AG04449 (cell line): ENCODE measurements at regions of chr6 and their contacts with region 1.

Region 1: DNA sequence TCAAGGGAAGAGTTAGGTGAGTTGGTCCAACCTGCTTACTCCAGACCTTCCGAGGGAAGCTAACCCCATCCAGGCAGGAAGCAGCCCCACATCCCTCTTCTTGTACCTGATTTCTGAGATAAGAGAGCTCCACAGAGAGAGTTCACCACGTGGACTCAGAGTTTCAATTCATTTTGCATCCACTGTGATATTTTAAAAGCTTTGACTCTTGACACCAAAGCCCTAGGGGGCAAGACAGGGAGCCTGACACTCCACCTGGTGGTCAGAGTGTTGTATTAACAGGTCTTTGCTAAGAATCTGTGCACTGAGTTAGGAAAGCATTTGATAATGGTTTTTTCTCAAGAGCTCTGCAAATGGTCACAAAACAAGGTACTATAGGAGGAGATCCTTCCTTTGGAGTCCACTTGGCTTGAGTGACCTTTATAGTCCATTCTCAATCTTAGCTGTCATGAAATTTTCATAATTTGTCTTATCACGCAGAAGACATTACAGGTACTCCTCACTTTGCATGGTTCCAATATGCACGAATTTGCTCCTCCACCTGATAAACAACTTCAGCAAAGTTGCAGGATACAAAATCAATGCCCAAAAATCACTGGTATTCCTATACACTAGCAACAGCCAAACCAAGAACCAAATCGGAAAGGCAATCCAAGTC is 56.2 kb upstream of the RIPOR2 start:
- DNase-seq: no peak
- H3K4me3 ChIP-seq: no peak overlapping the region
- CTCF ChIP-seq: peak; percentile 54

Region 2: DNA sequence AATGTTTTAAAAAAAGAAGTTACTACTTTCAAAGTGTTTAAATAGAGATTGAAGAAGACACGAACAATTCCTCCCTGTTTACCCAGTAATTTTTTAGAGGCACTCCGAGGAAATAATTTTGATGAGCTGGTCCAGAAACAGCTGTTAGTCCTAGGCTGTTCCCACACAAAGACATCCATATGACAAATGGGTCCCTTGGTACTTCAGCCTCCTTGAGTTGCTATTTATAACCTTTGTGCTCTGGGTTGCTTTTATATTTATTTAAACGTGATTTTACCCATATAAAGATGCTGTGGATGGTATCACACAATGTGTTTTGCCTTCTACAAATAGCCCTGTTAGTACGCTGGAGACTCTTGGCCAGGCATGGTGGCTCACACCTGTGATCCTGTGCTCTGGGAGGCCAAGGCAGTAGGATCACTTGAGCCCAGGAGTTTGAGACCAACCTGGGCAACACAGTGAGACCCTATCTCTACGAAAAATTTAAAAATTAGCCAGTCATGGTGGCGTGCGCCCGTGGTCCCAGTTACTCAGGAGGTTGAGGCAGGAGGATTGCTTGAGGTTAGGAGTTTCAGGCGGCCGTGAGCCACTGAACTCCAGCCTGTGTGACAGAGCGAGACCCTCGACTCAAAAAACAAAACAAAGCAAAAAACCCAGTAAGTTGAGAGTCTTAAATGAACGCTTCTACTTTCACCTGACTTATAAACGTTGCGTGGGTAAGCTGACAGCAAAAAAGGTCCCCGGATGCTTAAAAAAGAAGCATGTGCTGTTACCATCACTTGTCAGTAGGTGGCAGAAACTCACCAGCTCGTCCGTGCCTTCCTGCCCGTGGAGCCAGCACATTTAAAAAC is 136.3 kb before region 1 on chr6:
- CTCF ChIA-PET with region 1: interaction called, 188 read pairs
- POLR2A ChIA-PET with region 1: interaction called, 3 read pairs
- DNase-seq: no peak
- H3K4me3 ChIP-seq: no peak overlapping the region
- CTCF ChIP-seq: peak; percentile 85

Region 3: GRCh38 chr6:24874776-24875534 is 117.0 kb before region 1 on chr6:
- CTCF ChIA-PET with region 1: interaction called, 15 read pairs
- POLR2A ChIA-PET with region 1: no interaction called
- DNase-seq: no peak
- H3K4me3 ChIP-seq: no peak overlapping the region
- CTCF ChIP-seq: no peak

Region 4: DNA sequence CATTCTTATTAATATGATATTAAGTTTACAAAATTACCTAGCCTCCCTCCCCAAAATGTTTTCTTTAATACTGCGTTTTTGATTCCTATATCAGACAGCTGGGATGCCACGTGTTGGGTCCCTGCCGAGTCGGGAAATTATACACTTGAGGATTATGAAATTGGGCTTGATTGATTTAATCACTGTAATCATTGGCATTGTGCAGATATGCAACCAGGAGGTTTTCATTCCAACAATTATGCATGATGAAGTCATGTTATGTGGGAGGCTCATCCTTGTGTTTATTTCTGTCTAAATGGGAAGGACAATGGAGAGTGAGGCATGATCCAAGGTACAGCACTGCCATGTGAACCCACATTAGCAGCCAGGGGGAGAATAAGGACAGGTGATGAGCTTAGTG is 25.6 kb before region 1 on chr6:
- CTCF ChIA-PET with region 1: interaction called, 17 read pairs
- POLR2A ChIA-PET with region 1: no interaction called
- DNase-seq: no peak
- H3K4me3 ChIP-seq: no peak overlapping the region
- CTCF ChIP-seq: no peak

Region 5: GRCh38 chr6:25006565-25007001 is 14.6 kb after region 1 on chr6:
- CTCF ChIA-PET with region 1: interaction called, 47 read pairs
- POLR2A ChIA-PET with region 1: no interaction called
- DNase-seq: no peak
- H3K4me3 ChIP-seq: no peak overlapping the region
- CTCF ChIP-seq: no peak

Region 6: GRCh38 chr6:25070547-25071366 is 78.8 kb after region 1 on chr6:
- CTCF ChIA-PET with region 1: interaction called, 31 read pairs
- POLR2A ChIA-PET with region 1: no interaction called
- DNase-seq: no peak
- H3K4me3 ChIP-seq: no peak overlapping the region
- CTCF ChIP-seq: peak; percentile 80

Region 7: GRCh38 chr6:25112207-25112874 is 120.4 kb after region 1 on chr6:
- CTCF ChIA-PET with region 1: no interaction called
- POLR2A ChIA-PET with region 1: no interaction called
- DNase-seq: no peak
- H3K4me3 ChIP-seq: no peak overlapping the region
- CTCF ChIP-seq: no peak

Region 8: GRCh38 chr6:25156096-25156495 is 164.2 kb after region 1 on chr6:
- CTCF ChIA-PET with region 1: no interaction called
- POLR2A ChIA-PET with region 1: no interaction called
- DNase-seq: no peak
- H3K4me3 ChIP-seq: no peak overlapping the region
- CTCF ChIP-seq: no peak